ENCODE measurements at regions of chr1 and their contacts with region 1.

Region 1: DNA sequence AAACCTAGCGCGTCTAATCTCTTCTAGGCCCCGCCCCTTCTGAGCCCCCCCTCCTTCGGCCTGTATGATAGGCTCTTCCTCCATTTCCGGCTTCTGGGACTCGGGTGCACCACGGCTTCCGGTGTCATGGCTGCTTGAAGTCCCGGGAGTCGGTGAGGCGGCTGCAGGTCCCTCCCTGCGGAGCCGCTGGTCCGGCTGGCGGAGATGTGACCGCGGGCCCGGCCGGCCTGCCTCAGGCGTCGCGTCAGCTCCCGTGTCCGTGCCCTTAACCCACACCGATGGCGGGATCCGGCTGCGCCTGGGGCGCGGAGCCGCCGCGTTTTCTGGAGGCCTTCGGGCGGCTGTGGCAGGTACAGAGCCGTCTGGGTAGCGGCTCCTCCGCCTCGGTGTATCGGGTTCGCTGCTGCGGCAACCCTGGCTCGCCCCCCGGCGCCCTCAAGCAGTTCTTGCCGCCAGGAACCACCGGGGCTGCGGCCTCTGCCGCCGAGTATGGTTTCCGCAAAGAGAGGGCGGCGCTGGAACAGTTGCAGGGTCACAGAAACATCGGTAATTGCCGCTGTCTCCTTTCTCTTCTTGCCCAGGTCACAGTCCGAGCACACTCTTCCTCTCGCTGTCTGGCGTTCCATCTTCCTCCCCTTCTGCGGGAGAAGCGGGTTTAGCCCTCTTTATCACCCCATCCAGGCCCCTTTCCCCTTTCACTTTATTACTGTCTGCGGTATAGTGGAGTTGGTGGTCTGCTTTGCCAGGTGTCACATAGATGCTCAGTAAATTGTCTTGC is at the start of gene UHMK1:
- DNase-seq: peak; percentile 74 to 85
- H3K4me3 ChIP-seq: peak within 1 kb of the TSS; percentile 97
- H3K27ac ChIP-seq: peak within 1 kb of the TSS; percentile 61
- H3K4me1 ChIP-seq: 0 out of 2 replicates have a peak, but pooled peaks cover 12% of the 10 kb centered on the region
- H3K27me3 ChIP-seq: no peaks in the 10 kb centered on the region
- CTCF ChIP-seq: no peak
- total RNA-seq, gene UHMK1: 34.8 and 49.5 TPM in 2 replicates

Region 2: DNA sequence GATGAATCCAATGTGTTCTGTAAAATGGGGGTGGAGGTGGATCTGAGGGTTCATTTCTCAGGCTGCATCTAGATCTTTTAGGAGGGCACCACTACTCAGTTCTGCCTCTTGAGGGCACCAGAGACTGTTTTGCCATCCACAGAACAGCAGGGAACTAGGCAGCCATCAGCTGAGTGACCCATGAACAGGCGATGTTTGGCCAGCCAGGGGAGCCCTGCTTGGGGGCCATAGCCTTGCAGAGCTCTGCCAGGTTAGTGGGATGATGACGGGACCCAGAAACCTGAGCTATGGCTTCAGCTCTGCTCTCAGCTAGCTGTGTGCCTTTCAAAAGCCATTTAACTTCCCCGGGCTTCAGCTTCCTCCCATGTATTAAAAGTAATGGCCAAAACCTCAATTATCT is 441.9 kb before region 1 on chr1:
- CTCF ChIA-PET with region 1: no interaction called
- POLR2A ChIA-PET with region 1: no interaction called
- intact Hi-C with region 1: loop called (anchors 5 kb)
- DNase-seq: peak; percentile 52 to 70
- H3K4me3 ChIP-seq: no peak overlapping the region
- H3K27ac ChIP-seq: no peak overlapping the region
- H3K4me1 ChIP-seq: peaks cover 15% of the 10 kb centered on the region
- H3K27me3 ChIP-seq: no peaks in the 10 kb centered on the region
- CTCF ChIP-seq: peak; percentile 92

Region 3: DNA sequence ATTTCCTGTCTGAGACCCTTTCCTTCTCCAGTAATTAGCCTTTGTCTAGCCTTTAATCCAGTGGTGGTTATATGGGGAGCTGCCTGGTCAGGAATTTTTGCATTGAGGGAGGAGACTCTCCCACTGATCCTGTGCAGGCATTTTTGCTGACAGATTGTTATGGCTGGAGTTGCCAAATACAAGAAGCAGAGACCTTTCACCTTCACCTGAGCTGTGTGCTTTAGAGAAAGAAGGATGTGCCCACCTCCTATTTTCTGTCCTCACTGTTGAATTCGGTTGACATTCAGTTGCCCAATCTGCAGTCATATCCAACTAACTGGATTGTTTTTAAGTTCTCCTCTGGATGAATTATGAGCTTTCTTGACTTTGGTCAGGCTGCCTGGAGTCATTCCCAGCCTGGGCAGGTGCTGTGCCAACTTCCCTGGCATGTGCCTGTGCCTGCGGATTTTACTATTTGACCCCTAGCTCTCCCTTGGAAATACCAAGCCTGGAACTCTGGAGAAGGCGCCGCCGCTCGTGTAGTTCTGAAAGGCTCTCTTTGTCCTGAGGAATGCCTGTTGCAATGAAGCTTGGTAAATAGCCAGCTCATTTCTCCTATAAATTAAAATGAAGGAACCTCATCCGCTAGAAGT is 284.5 kb before region 1 on chr1:
- CTCF ChIA-PET with region 1: no interaction called
- POLR2A ChIA-PET with region 1: no interaction called
- intact Hi-C with region 1: no loop called
- DNase-seq: peak in 1 of 2 experiments; percentile 63
- H3K4me3 ChIP-seq: no peak overlapping the region
- H3K27ac ChIP-seq: no peak overlapping the region; the same call in 1 of the 2 replicates
- H3K4me1 ChIP-seq: peaks cover 11% of the 10 kb centered on the region; the same call in 1 of the 2 replicates
- H3K27me3 ChIP-seq: no peaks in the 10 kb centered on the region
- CTCF ChIP-seq: no peak

Region 4: GRCh38 chr1:162357681-162358266 is 140.1 kb before region 1 on chr1:
- CTCF ChIA-PET with region 1: no interaction called
- POLR2A ChIA-PET with region 1: no interaction called
- intact Hi-C with region 1: loop called (anchors 5 kb)
- DNase-seq: no peak
- H3K4me3 ChIP-seq: no peak overlapping the region
- H3K27ac ChIP-seq: no peak overlapping the region
- H3K4me1 ChIP-seq: no peaks in the 10 kb centered on the region
- H3K27me3 ChIP-seq: no peaks in the 10 kb centered on the region
- CTCF ChIP-seq: peak; percentile 67

Region 5: DNA sequence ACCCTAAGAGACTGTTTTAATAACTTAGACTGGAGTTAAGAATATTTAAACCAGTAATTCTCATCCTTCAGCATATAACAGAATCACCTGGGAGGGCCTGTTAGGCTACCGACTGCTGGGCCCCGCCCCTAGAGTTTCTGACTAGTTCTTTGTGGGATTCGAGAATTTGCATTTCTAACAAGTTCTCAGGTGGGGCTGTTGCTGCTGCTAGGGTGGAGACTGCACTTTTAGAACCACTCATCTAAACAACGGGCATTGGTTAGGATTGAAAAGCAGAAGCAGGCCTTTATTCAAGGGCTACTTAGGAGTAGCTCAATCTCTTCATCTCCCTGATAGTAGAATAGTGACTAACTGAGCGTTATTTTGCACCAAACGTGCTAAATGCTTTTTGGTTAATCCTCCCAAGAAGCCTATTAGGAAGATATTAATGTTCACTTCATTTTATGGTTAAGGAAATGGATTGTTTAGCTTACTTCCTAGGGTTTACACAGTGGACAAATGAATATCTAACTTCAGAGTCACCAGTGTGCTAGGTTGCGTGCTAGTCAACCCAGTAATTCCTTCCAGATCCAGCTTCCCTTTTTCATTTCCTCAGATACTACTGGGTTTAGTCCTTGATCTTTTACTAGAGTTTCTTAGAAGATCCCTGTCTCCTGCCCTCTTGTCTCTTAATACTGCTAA is 32.5 kb after region 1 on chr1:
- CTCF ChIA-PET with region 1: interaction called, 12 read pairs
- POLR2A ChIA-PET with region 1: no interaction called
- intact Hi-C with region 1: no loop called
- DNase-seq: no peak
- H3K4me3 ChIP-seq: no peak overlapping the region
- H3K27ac ChIP-seq: no peak overlapping the region
- H3K4me1 ChIP-seq: no peaks in the 10 kb centered on the region
- H3K27me3 ChIP-seq: no peaks in the 10 kb centered on the region
- CTCF ChIP-seq: no peak

Region 6: GRCh38 chr1:162541619-162542141 is 43.8 kb after region 1 on chr1:
- CTCF ChIA-PET with region 1: no interaction called
- POLR2A ChIA-PET with region 1: interaction called, 25 read pairs
- intact Hi-C with region 1: no loop called
- DNase-seq: peak; percentile 52 to 57
- H3K4me3 ChIP-seq: no peak overlapping the region
- H3K27ac ChIP-seq: peak overlapping the region; percentile 54
- H3K4me1 ChIP-seq: peaks cover 28% of the 10 kb centered on the region
- H3K27me3 ChIP-seq: no peaks in the 10 kb centered on the region
- CTCF ChIP-seq: no peak

Region 7: DNA sequence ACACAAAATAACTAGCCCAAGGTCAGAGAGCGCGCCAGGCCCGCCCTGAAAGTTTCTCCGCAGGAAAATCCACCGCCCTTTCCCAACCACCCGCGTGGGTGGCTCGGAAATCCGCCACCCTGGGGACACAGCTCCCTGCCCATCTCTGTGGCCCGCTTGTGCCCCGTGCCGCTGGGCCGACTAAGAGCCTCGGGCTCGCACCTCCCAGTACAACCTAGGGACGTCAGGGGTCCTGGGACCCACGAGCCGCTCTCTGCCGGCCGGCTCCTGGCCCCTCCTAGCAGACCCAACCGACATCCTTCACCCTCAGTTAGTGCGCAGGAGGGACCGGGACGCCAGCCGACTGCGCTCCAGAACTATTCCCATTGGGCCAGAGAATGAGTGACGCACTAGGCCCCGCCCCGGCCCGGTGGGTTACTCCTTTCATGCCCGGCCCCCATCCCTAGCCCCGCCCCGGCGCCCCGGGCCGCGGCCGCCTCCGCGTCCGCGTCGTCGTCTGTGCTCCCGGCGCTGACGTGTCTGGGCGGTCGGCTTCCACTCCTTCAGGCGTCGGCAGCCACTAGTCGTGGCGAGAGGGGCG is 63.2 kb after region 1 on chr1:
- CTCF ChIA-PET with region 1: no interaction called
- POLR2A ChIA-PET with region 1: no interaction called
- intact Hi-C with region 1: loop called (anchors 2 kb)
- DNase-seq: peak; percentile 87 to 98
- H3K4me3 ChIP-seq: peak overlapping the region; percentile 70
- H3K27ac ChIP-seq: peak overlapping the region; percentile 54
- H3K4me1 ChIP-seq: peaks cover 17% of the 10 kb centered on the region
- H3K27me3 ChIP-seq: no peaks in the 10 kb centered on the region
- CTCF ChIP-seq: no peak

Region 8: GRCh38 chr1:163321311-163322305 is 823.7 kb after region 1 on chr1 and contains the start of gene NUF2:
- CTCF ChIA-PET with region 1: no interaction called
- POLR2A ChIA-PET with region 1: interaction called, 12 read pairs
- intact Hi-C with region 1: no loop called
- DNase-seq: peak; percentile 94 to 97
- H3K4me3 ChIP-seq: peak within 1 kb of the TSS; percentile 96
- H3K27ac ChIP-seq: peak within 1 kb of the TSS; percentile 79
- H3K4me1 ChIP-seq: peaks cover 25% of the 10 kb centered on the region
- H3K27me3 ChIP-seq: no peaks in the 10 kb centered on the region
- CTCF ChIP-seq: 0 out of 2 replicates have a peak, but pooled peaks have one; percentile 16
- total RNA-seq, gene NUF2: 21.6 and 33.3 TPM in 2 replicates

Measured in PC-9 (cell line).